ENCODE measurements at regions of chrX and their contacts with region 1.

Region 1: GRCh38 chrX:38282044-38282443 is 45.3 kb downstream of the RPGR start:
- DNase-seq: no peak
- H3K4me3 ChIP-seq: no peak overlapping the region
- H3K27ac ChIP-seq: no peak overlapping the region
- H3K4me1 ChIP-seq: no peaks in the 10 kb centered on the region
- H3K27me3 ChIP-seq: no peaks in the 10 kb centered on the region
- CTCF ChIP-seq: peak in 2 of 4 experiments; percentile 28 to 47
- EP300 ChIP-seq: no peak
- POLR2A ChIP-seq: no peak

Region 2: GRCh38 chrX:37993837-37994619 is 288.0 kb before region 1 on chrX:
- intact Hi-C with region 1: no loop called
- DNase-seq: no peak
- H3K4me3 ChIP-seq: no peak overlapping the region
- H3K27ac ChIP-seq: no peak overlapping the region
- H3K4me1 ChIP-seq: no peaks in the 10 kb centered on the region
- H3K27me3 ChIP-seq: no peaks in the 10 kb centered on the region
- CTCF ChIP-seq: no peak
- EP300 ChIP-seq: no peak
- POLR2A ChIP-seq: no peak

Region 3: GRCh38 chrX:38117485-38117884 is 164.6 kb before region 1 on chrX:
- intact Hi-C with region 1: no loop called
- DNase-seq: no peak
- H3K4me3 ChIP-seq: no peak overlapping the region
- H3K27ac ChIP-seq: no peak overlapping the region
- H3K4me1 ChIP-seq: no peaks in the 10 kb centered on the region
- H3K27me3 ChIP-seq: no peaks in the 10 kb centered on the region
- CTCF ChIP-seq: no peak
- EP300 ChIP-seq: no peak
- POLR2A ChIP-seq: no peak

Region 4: DNA sequence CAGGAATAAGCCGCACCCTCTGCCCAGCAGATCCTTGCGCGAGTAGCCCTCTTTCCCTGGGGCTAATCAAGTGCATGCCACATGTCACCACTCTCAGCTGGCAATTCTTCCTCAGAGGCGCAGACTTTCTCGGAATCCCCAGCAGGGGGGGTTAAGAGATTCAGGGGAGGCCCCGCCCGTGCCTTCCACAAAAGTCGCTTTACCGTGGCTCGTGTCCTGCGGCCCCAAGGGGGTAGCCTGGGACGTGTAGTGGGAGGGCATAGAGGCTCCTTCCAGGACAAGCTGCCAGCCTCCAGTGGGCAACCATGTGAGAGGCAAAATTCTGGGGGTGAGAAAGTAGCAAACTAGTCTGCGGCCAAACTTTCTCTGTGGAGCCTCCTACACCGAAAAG is 62.0 kb before region 1 on chrX:
- intact Hi-C with region 1: loop called (anchors 10 kb)
- DNase-seq: peak; percentile 72
- H3K4me3 ChIP-seq: peak overlapping the region; percentile 40 to 68 (median 60)
- H3K27ac ChIP-seq: peak overlapping the region; percentile 39 to 83 (median 75)
- H3K4me1 ChIP-seq: peaks cover 0 to 20% (median 3%) of the 10 kb centered on the region in 4 donors
- H3K27me3 ChIP-seq: no peaks in the 10 kb centered on the region
- CTCF ChIP-seq: peak in 1 of 4 experiments; percentile 31
- EP300 ChIP-seq: no peak
- POLR2A ChIP-seq: no peak